ENCODE measurements at regions of chr16 and their contacts with region 1.

Region 1: DNA sequence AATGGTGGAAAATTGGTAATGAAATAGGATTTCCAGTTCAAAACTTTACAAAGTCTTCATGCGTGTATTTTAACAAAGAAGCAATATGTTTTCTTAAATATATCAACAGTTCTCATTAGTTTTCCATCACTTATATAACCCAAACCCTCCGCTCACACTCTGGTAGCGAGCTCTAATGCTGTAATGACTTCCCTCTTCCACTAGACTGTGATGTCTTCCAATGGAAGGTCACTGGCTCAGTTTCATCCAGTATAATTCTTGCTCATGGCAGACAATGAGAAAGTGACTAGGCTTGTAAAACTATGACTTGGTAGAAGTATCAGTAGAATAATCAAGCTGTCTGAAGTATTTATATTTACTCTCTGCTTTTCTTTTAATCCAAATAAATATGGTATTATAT is 32.8 kb downstream of the NETO2 start:
- DNase-seq: no peak
- ATAC-seq: no peak
- H3K4me3 Mint-ChIP-seq: no peak overlapping the region
- H3K27ac Mint-ChIP-seq: no peak overlapping the region
- H3K4me1 Mint-ChIP-seq: peaks cover 23% of the 10 kb centered on the region
- H3K27me3 Mint-ChIP-seq: peaks cover 3% of the 10 kb centered on the region

Region 2: GRCh38 chr16:47037746-47038458 is 73.0 kb before region 1 on chr16:
- CTCF ChIA-PET with region 1: interaction called, 4 read pairs
- POLR2A ChIA-PET with region 1: no interaction called
- intact Hi-C with region 1: loop called in 1 of 2 experiments (anchors 5 kb)
- DNase-seq: peak; percentile 94
- ATAC-seq: peak; percentile 98
- H3K4me3 Mint-ChIP-seq: peak overlapping the region; percentile 65
- H3K27ac Mint-ChIP-seq: no peak overlapping the region
- H3K4me1 Mint-ChIP-seq: peaks cover 2% of the 10 kb centered on the region
- H3K27me3 Mint-ChIP-seq: peaks cover 8% of the 10 kb centered on the region

Region 3: GRCh38 chr16:48459167-48459566 is 1348.2 kb after region 1 on chr16:
- CTCF ChIA-PET with region 1: no interaction called
- POLR2A ChIA-PET with region 1: no interaction called
- intact Hi-C with region 1: loop called in 1 of 2 experiments (anchors 5 kb)
- DNase-seq: no peak
- ATAC-seq: no peak
- H3K4me3 Mint-ChIP-seq: no peak overlapping the region
- H3K27ac Mint-ChIP-seq: no peak overlapping the region
- H3K4me1 Mint-ChIP-seq: peaks cover 9% of the 10 kb centered on the region
- H3K27me3 Mint-ChIP-seq: peaks cover 35% of the 10 kb centered on the region